ENCODE measurements at regions of chr12 and their contacts with region 1.

Region 1: DNA sequence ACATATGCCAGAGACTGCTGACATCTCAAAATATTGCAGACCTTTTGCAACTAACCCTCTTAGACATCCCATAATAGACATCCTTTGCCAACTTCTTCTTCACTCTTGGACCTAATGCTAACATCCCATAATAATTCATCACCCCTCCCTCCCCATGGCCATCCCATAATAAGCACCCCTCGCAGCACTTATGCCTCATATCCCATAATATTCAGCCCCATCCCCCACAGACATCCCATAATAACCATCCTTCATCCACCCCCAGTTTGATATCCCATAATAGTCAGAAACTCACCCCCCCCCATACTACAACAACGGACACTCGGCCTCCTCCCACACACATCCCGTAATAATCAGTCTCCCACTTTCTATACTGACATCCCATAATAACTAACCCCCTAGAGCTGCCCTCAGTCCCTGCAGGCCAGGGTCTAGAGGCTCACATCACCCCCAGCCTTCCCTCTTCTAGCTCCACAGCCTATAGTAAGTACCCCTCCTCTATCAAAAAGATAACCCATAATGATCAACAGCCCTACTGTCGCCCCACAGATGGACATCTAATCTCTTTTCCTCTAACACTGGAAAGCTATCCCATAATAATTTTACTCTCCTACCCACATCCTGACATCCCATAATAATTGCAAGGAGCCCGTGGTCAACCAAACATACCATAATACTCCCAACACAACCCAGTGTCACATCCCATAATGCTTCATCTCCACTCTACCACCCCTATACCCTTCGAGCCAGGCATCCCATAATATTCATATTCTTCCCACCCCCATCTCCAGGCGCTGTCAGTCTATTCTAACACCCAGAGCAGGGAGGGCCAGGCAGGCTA is 792 bp upstream of the CHD4 start:
- DNase-seq: peak in 1 of 2 donors; percentile 52
- ATAC-seq: peak; percentile 18 to 34
- H3K4me3 ChIP-seq: peak overlapping the region in 1 of 4 donors; percentile 98
- H3K27ac ChIP-seq: peak overlapping the region; percentile 95 to 99 (median 97)
- H3K4me1 ChIP-seq: peaks cover 44 to 52% of the 10 kb centered on the region in 2 donors
- H3K27me3 ChIP-seq: no peaks in the 10 kb centered on the region
- CTCF ChIP-seq: no peak
- POLR2A ChIP-seq: no peak

Region 2: GRCh38 chr12:6569312-6569711 is 38.7 kb before region 1 on chr12:
- in situ Hi-C with region 1: no loop called
- intact Hi-C with region 1: loop called (anchors 2 kb)
- DNase-seq: no peak
- ATAC-seq: no peak
- H3K4me3 ChIP-seq: no peak overlapping the region
- H3K27ac ChIP-seq: peak overlapping the region in 3 of 4 donors; percentile 91 to 98 (median 95)
- H3K4me1 ChIP-seq: peaks cover 14 to 15% of the 10 kb centered on the region in 2 donors
- H3K27me3 ChIP-seq: no peaks in the 10 kb centered on the region
- CTCF ChIP-seq: no peak
- POLR2A ChIP-seq: no peak